Esophagus squamous epithelium (tissue), 5 donors: ENCODE measurements at regions of chr17 and their contacts with region 1.

Region 1: DNA sequence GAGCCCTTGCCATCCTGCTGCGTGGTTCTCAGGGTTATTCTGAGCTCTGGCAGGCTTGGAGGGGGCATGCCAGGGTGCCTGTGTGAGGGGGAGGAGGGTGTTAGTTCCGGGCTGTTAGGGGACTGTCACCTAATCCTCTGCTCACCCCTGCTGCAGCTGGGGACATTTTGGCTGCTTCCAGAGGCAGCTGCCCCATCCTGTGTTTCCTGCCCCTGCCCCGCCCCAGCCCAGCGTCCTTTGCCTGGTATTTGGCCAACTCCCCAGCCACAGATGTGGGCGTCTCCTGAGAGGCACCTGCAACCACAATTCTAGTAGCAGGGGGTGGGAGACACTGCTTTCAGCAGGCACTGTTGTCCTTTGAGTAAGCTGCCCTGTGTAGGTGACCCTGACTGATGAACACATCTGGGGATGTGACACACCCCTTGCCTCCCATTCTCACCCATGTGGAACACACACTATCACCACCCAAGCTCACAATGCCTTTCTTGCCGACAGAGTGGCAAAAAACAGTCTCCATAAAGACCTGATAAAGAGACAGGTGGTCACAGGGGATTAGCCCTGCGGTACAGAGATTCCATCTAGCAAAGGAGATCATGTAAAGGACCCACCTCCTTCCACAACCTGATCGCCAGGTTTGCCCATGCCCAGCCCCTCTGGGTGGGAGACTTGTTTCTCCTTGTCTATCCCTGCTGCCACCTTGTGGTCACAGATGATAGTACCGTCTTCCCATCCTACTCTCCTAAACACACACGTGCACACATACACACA is at the start of gene CHRNE:
- DNase-seq: no peak
- H3K4me3 ChIP-seq: peak within 1 kb of the TSS in 2 of 4 donors; percentile 9 to 18
- H3K27ac ChIP-seq: peak within 1 kb of the TSS; percentile 46 to 78 (median 73)
- H3K4me1 ChIP-seq: peaks cover 23 to 57% (median 36%) of the 10 kb centered on the region in 3 donors
- H3K27me3 ChIP-seq: peaks cover 0 to 25% (median 0%) of the 10 kb centered on the region in 4 donors
- CTCF ChIP-seq: peak; percentile 51 to 88 (median 74)
- POLR2A ChIP-seq: no peak
- total RNA-seq, gene CHRNE: 0.57 TPM in 1 of 4 donors, not detected in the others

Region 2: DNA sequence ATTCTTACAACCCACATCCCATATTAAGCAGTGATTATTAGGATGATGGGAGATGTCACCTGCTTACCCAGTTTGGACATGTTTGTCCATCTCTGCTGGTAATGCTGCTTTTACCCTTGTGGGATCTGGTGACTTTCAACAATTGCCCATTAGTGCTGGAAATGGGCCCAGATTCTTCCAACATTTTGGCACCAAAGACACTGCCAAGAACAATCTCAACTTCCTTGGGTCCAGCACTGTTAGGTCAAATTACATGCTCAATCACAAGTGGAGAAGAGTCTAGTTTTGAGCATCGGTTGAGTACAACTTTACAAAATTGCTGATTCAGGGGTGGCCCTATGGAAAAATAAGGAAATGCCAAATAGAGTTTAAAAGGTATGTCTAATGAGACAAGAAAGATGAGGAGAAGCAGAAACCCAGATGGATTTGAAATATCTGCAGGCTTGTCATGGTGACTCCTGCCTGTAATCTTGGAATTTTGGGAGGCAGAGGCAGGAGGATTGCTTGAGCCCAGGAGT is 162.1 kb after region 1 on chr17:
- intact Hi-C with region 1: loop called (anchors 10 kb)
- DNase-seq: no peak
- H3K4me3 ChIP-seq: no peak overlapping the region
- H3K27ac ChIP-seq: no peak overlapping the region
- H3K4me1 ChIP-seq: peaks cover 0 to 9% (median 0%) of the 10 kb centered on the region in 3 donors
- H3K27me3 ChIP-seq: no peaks in the 10 kb centered on the region
- CTCF ChIP-seq: no peak
- POLR2A ChIP-seq: no peak